ENCODE measurements at regions of chrX and their contacts with region 1.

Region 1: GRCh38 chrX:100768679-100769338 is 36.9 kb upstream of the SYTL4 start:
- DNase-seq: peak; percentile 49
- ATAC-seq: no peak; the same call in 2 of the 3 replicates
- H3K4me3 ChIP-seq: no peak overlapping the region
- H3K27ac ChIP-seq: no peak overlapping the region
- H3K4me1 ChIP-seq: no peaks in the 10 kb centered on the region
- H3K27me3 ChIP-seq: no peaks in the 10 kb centered on the region
- CTCF ChIP-seq: peak; percentile 90
- EP300 ChIP-seq: no peak
- POLR2A ChIP-seq: no peak
- RAD21 ChIP-seq: peak; percentile 86

Region 2: DNA sequence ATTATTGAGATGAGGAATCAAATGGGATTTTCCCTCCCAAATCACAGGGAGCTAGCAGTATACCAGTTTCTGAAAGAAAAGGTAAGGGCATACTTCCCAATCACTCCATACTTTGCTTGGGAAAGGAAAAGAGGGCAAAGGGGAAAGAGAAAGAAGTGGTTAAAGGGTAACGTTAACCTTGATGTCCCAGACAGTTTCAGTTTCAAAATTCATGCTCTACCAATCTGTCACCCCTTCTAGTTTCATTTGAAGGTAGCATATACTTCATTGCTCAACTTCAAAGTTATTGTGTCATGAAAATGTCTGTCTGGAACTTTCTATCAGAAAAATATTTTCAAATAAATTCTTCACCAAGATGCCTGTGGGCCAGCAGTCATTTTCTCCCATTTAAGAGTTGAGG is 168.1 kb before region 1 on chrX:
- CTCF ChIA-PET with region 1: no interaction called
- POLR2A ChIA-PET with region 1: no interaction called
- in situ Hi-C with region 1: no loop called
- intact Hi-C with region 1: no loop called
- DNase-seq: no peak
- ATAC-seq: no peak
- H3K4me3 ChIP-seq: no peak overlapping the region
- H3K27ac ChIP-seq: no peak overlapping the region
- H3K4me1 ChIP-seq: no peaks in the 10 kb centered on the region
- H3K27me3 ChIP-seq: no peaks in the 10 kb centered on the region
- CTCF ChIP-seq: no peak
- EP300 ChIP-seq: no peak
- POLR2A ChIP-seq: no peak
- RAD21 ChIP-seq: no peak

Region 3: DNA sequence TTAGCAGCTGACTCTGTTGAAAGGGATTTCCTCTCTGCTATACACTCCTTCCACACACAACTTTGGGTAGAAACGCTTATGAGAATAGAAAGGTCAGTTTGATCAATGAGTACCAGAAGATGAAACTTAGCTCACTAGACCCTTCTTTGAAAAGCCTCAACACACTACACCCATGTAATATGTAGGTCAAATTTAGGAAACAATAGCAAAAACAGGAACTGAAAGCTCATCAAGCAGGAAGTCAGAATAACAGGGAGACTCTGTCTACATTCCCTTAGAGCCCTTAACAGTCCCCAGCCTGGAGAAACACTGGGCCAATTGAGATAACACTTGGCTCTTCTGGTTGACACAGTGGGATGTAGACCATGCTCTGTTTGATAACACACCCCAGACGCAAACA is 94.1 kb before region 1 on chrX:
- CTCF ChIA-PET with region 1: interaction called, 23 read pairs
- POLR2A ChIA-PET with region 1: no interaction called
- in situ Hi-C with region 1: no loop called
- intact Hi-C with region 1: no loop called
- DNase-seq: no peak
- ATAC-seq: no peak
- H3K4me3 ChIP-seq: no peak overlapping the region
- H3K27ac ChIP-seq: no peak overlapping the region
- H3K4me1 ChIP-seq: peaks cover 10% of the 10 kb centered on the region
- H3K27me3 ChIP-seq: no peaks in the 10 kb centered on the region
- CTCF ChIP-seq: no peak
- EP300 ChIP-seq: no peak
- POLR2A ChIP-seq: no peak
- RAD21 ChIP-seq: no peak

Region 4: DNA sequence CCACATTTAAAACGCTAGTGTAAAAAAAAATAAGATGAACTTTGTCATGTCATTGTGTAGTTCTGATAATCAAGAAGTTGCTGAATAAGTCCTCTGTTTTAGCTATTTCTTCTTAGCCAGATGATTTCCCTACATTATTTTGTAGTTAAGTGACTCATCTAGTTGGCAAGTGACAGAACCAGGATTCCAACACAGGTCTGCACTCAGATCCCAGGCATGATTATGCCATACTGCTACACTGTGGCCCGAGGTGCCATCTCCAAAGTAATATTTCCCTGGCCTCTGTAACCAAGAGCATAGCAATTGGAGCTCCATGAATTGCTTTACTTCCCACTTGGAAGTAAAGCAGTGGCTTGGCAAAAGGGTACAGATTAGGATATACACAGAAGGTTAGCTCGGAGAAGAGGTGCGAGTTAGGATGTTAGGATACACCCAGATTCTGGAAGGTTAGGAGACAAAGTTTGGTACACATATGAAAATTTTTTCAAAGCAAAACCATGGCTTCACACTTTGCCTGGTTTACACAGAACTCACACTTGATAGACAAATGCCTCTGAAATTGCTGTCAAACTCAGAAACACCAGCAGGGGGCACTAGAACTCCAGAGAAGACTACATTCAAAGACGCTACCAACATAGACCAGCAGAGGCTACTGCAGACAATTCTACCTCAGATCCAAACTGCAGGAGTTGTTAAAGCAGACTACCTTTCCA is 83.4 kb before region 1 on chrX:
- CTCF ChIA-PET with region 1: interaction called, 139 read pairs
- POLR2A ChIA-PET with region 1: no interaction called
- in situ Hi-C with region 1: loop called (anchors 5 kb)
- intact Hi-C with region 1: loop called (anchors 1 kb)
- DNase-seq: peak; percentile 62
- ATAC-seq: peak; percentile 90
- H3K4me3 ChIP-seq: no peak overlapping the region
- H3K27ac ChIP-seq: no peak overlapping the region
- H3K4me1 ChIP-seq: no peaks in the 10 kb centered on the region
- H3K27me3 ChIP-seq: no peaks in the 10 kb centered on the region
- CTCF ChIP-seq: peak; percentile 78
- EP300 ChIP-seq: no peak
- POLR2A ChIP-seq: no peak
- RAD21 ChIP-seq: peak; percentile 76

Region 5: DNA sequence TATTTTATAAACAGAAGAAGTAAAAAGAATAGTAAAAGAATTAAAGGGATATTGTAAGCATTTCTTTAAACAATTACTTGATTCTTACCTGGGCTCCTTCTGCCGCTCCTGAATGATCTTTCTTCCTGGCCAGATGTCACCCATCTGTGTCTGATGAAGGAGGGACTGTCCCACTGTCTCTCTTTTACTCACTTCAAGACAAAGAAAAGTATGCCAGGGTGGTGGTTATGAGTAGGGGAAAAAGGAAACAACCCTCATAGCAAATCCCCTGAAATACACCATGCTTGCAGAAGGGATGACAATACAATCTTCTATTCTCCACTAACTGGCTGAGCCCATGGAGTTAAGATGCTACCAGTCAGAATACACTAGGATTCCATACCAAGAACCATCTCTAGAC is 68.0 kb before region 1 on chrX:
- CTCF ChIA-PET with region 1: no interaction called
- POLR2A ChIA-PET with region 1: no interaction called
- in situ Hi-C with region 1: no loop called
- intact Hi-C with region 1: no loop called
- DNase-seq: no peak
- ATAC-seq: no peak
- H3K4me3 ChIP-seq: no peak overlapping the region
- H3K27ac ChIP-seq: no peak overlapping the region
- H3K4me1 ChIP-seq: no peaks in the 10 kb centered on the region
- H3K27me3 ChIP-seq: no peaks in the 10 kb centered on the region
- CTCF ChIP-seq: no peak
- EP300 ChIP-seq: no peak
- POLR2A ChIP-seq: no peak
- RAD21 ChIP-seq: no peak

Region 6: DNA sequence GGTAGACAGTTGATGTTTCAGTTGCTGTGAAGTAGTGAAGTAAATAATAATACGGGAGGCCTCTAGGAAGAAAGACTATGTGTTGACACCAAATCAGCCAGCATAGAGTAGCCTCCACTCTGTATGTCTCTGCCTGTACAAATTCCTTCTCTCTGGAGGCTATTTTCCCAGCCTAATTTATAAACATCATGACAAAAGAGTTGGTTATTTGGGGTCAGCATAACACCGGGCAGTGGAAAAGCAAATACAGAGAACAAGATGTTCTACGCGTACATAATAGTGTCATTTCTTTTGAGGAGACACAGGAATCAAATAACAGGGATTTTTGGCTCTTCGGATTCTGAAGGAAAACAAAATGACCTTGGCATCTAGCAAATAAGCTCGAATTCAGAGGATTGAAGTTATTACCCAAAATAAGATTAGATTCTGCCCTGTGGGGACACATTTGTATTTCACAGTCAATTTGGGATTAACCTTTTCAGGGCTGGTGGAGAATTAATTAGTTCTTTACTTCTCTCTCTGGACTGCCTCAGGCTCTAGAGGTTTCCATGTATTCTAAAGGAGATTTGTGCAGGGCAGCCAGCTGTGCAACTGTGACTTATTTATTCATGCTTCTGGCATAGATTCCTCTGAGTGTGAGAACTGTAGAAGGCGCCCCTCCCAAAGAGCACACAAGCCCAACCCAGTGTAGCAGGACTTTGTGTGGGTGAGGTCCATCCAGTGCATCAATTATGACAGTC is 22.8 kb before region 1 on chrX:
- CTCF ChIA-PET with region 1: no interaction called
- POLR2A ChIA-PET with region 1: no interaction called
- in situ Hi-C with region 1: no loop called
- intact Hi-C with region 1: no loop called
- DNase-seq: no peak
- ATAC-seq: no peak
- H3K4me3 ChIP-seq: no peak overlapping the region
- H3K27ac ChIP-seq: no peak overlapping the region
- H3K4me1 ChIP-seq: peaks cover 20% of the 10 kb centered on the region
- H3K27me3 ChIP-seq: no peaks in the 10 kb centered on the region
- CTCF ChIP-seq: no peak
- EP300 ChIP-seq: no peak
- POLR2A ChIP-seq: no peak
- RAD21 ChIP-seq: no peak

Region 7: GRCh38 chrX:100863326-100863864 is 94.6 kb after region 1 on chrX:
- CTCF ChIA-PET with region 1: no interaction called
- POLR2A ChIA-PET with region 1: no interaction called
- in situ Hi-C with region 1: no loop called
- intact Hi-C with region 1: no loop called
- DNase-seq: no peak
- ATAC-seq: no peak
- H3K4me3 ChIP-seq: no peak overlapping the region
- H3K27ac ChIP-seq: no peak overlapping the region
- H3K4me1 ChIP-seq: no peaks in the 10 kb centered on the region
- H3K27me3 ChIP-seq: no peaks in the 10 kb centered on the region
- CTCF ChIP-seq: no peak
- EP300 ChIP-seq: no peak
- POLR2A ChIP-seq: no peak
- RAD21 ChIP-seq: no peak